ENCODE measurements at regions of chr3 and their contacts with region 1.

Region 1: DNA sequence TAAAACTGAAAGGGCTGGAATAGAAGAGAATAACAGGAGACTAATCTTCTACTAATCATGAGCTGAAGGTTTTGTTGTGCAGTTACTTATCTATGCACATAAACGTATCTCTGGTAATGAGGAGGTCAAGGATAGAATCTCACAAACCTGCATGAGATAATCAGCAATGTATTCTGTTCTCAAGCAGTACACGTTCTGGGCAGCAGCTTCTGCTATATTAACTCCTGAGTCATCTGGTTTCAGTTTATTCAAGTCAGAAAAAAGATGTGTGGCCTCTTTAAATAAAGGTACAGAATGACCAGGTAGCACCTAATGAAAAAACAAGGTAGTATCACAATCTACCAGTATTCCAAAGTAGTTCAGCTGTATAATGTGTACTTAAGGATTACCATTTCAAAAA is 34.9 kb downstream of the CDV3 start:
- DNase-seq: no peak
- H3K4me3 ChIP-seq: no peak overlapping the region
- H3K27ac ChIP-seq: no peak overlapping the region
- H3K4me1 ChIP-seq: no peaks in the 10 kb centered on the region
- CTCF ChIP-seq: no peak

Region 2: GRCh38 chr3:133620066-133620784 is 11.8 kb after region 1 on chr3:
- CTCF ChIA-PET with region 1: no interaction called
- POLR2A ChIA-PET with region 1: interaction called, 11 read pairs
- intact Hi-C with region 1: no loop called
- DNase-seq: peak; percentile 23
- H3K4me3 ChIP-seq: no peak overlapping the region
- H3K27ac ChIP-seq: no peak overlapping the region
- H3K4me1 ChIP-seq: no peaks in the 10 kb centered on the region
- CTCF ChIP-seq: no peak

Region 3: GRCh38 chr3:133655731-133656515 is 47.5 kb after region 1 on chr3:
- CTCF ChIA-PET with region 1: no interaction called
- POLR2A ChIA-PET with region 1: no interaction called
- intact Hi-C with region 1: loop called (anchors 5 kb)
- DNase-seq: no peak
- H3K4me3 ChIP-seq: no peak overlapping the region
- H3K27ac ChIP-seq: no peak overlapping the region
- H3K4me1 ChIP-seq: peaks cover 24% of the 10 kb centered on the region
- CTCF ChIP-seq: no peak